Tibial artery (tissue), 4 donors: ENCODE measurements at regions of chr5 and their contacts with region 1.

Region 1: GRCh38 chr5:96752341-96753016 is 55.3 kb downstream of the ERAP1 start:
- DNase-seq: no peak
- H3K4me3 ChIP-seq: no peak overlapping the region
- H3K27ac ChIP-seq: no peak overlapping the region
- H3K4me1 ChIP-seq: no peaks in the 10 kb centered on the region
- H3K27me3 ChIP-seq: no peaks in the 10 kb centered on the region
- CTCF ChIP-seq: peak; percentile 44

Region 2: DNA sequence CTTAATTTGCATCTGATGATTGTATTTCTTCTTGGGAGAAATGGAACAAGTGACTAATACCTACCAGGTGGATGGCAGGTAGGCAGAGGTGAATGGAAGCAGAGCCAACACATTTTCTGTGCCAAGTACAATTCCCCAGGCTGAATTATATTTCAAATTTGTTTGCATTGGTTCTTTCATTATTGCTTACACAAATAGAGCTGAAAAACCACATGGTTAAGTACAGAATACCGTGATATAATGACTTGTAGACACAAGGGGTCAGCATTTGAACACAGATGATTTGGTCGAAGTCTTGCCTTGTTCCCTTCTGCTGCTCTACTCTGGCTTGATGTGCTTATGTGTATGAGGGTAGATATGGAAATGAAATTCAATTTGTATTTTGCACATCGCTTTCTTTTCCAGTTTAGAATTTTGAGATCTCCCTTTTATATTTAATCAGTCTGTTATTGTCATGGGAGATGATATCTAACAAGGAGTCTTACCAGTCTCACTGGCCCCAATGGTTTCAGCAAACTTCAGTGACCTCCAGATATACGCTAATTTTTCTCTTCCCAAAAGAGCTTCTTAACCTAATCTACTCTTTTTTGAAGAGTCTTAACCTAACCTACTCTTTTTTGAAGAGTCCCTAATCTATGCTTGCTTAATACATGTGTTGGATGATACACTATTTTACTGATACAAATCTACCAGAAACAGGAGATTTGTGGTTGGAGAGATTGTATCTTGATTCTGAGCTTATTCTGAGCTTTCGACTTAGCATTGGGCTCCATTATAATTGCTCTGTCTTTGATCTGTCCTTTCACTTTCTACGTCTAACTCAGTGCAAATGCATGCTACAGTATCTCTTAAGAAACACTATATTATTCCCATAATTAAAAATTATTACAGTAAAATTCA is 407.6 kb before region 1 on chr5:
- intact Hi-C with region 1: loop called (anchors 10 kb)
- DNase-seq: no peak
- H3K4me3 ChIP-seq: no peak overlapping the region
- H3K27ac ChIP-seq: no peak overlapping the region
- H3K4me1 ChIP-seq: peaks cover 0 to 22% (median 10%) of the 10 kb centered on the region in 4 donors
- H3K27me3 ChIP-seq: no peaks in the 10 kb centered on the region
- CTCF ChIP-seq: peak; percentile 61 to 81

Region 3: GRCh38 chr5:96776621-96777020 is 24.1 kb after region 1 on chr5:
- intact Hi-C with region 1: loop called (anchors 1 kb)
- DNase-seq: no peak
- H3K4me3 ChIP-seq: no peak overlapping the region
- H3K27ac ChIP-seq: no peak overlapping the region
- H3K4me1 ChIP-seq: peaks cover 0 to 32% (median 7%) of the 10 kb centered on the region in 4 donors
- H3K27me3 ChIP-seq: no peaks in the 10 kb centered on the region
- CTCF ChIP-seq: no peak

Region 4: DNA sequence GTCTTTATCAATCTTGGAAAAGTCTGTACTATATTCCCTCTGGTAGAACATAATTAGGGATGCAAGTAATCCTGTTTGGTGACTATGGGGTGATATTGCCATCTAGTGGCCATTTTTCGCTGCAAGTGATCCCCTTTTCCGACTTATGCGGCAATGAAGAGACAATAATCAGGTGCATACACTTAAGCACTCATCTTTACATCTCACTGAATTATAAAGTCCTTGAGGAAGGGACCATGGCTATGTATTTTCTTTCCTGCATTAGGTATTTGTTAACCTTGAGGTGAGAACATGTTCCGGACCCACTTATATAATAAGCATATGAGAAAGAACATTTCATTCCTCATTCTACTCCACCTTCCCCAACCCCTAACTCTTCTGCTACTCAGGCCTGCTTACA is 409.6 kb after region 1 on chr5:
- intact Hi-C with region 1: loop called (anchors 10 kb)
- DNase-seq: peak in 1 of 2 donors; percentile 48
- H3K4me3 ChIP-seq: no peak overlapping the region
- H3K27ac ChIP-seq: no peak overlapping the region
- H3K4me1 ChIP-seq: no peaks in the 10 kb centered on the region
- H3K27me3 ChIP-seq: no peaks in the 10 kb centered on the region
- CTCF ChIP-seq: peak; percentile 78 to 88